ENCODE measurements at regions of chr17 and their contacts with region 1.

Region 1: GRCh38 chr17:5584383-5585286 is at the start of gene NLRP1:
- DNase-seq: peak; percentile 95
- H3K4me3 ChIP-seq: peak within 1 kb of the TSS; percentile 55 to 83 (median 57)
- H3K27ac ChIP-seq: peak within 1 kb of the TSS; percentile 91
- H3K4me1 ChIP-seq: peaks cover 26% of the 10 kb centered on the region
- H3K27me3 ChIP-seq: no peaks in the 10 kb centered on the region
- CTCF ChIP-seq: no peak
- POLR2A ChIP-seq: peak; percentile 95
- total RNA-seq, gene NLRP1: 50.0 and 53.9 TPM in 2 replicates

Region 2: DNA sequence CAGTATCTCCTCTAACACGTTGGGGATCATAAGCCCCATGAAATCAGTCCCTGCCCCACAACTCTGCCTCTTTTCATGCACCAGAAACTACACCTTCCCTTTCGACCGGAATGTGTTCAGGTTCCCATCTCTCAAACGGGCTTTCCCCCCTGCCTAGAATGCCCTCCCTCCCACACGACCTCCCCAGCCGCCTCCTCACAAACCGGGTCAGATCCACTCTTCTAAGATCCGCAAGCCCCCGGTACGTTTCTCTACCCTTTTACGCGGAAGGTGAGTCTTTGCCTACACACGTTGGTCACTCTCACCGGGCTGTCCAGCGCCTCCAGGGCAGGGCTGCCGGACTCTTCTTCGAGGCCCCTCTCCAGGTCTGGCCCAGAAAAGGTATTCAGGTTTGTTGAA is 116.6 kb before region 1 on chr17:
- CTCF ChIA-PET with region 1: no interaction called
- POLR2A ChIA-PET with region 1: no interaction called
- dilution Hi-C with region 1: no loop called
- intact Hi-C with region 1: no loop called
- DNase-seq: no peak
- H3K4me3 ChIP-seq: peak overlapping the region; percentile 77 to 92 (median 87)
- H3K27ac ChIP-seq: no peak overlapping the region
- H3K4me1 ChIP-seq: peaks cover 7% of the 10 kb centered on the region
- H3K27me3 ChIP-seq: no peaks in the 10 kb centered on the region
- CTCF ChIP-seq: no peak
- POLR2A ChIP-seq: no peak

Region 3: DNA sequence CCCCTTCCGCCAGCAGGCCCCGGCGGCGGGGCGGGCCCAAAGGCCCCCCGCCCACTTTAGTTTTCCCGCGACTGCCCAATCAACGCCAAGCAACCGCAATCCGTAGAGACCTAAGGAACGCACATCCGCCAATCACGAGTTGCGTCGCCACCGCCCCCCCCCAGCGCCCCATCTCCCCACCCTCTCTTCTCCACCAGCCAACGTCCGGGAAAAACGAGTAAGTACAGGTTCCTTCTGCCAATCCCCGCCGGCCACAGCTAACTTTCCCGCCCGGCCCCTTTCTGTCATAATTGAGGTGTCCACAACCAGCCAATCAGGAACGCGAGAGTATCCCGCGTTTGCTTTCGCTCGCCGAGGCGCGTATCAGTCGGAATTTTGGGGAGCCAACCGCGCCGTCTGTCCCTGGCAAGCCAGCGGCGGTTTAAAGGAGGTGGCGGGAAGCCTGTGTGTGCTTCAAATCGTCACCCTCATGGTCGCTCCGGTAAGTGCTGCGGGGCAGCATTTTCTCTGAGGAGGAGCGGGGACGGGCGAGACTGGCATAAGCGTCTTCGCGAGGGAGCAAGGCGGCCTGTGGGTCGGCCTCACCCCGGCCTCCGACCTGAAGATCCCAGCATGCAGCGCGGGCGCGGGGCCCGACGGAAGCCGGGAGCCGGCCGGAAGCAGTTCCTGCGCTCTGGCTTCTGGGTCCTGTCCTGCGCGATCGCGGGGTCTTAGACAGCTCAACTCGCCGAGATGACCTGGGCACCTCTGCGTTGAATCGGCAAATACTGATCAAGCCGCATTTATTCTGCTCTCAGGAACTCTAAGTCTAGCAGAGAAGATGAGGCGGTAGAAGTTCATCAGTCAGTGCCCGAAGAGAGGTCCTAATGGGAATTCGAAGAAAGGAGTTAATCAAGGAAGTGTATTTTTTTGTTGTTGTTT is 98.2 kb before region 1 on chr17 and contains the start of gene MIS12:
- CTCF ChIA-PET with region 1: no interaction called
- POLR2A ChIA-PET with region 1: interaction called, 3 read pairs
- dilution Hi-C with region 1: no loop called
- intact Hi-C with region 1: loop called (anchors 1 kb)
- DNase-seq: peak; percentile 100
- H3K4me3 ChIP-seq: peak within 1 kb of the TSS; percentile 95 to 98 (median 96)
- H3K27ac ChIP-seq: peak within 1 kb of the TSS; percentile 95
- H3K4me1 ChIP-seq: peaks cover 20% of the 10 kb centered on the region
- H3K27me3 ChIP-seq: no peaks in the 10 kb centered on the region
- CTCF ChIP-seq: no peak
- POLR2A ChIP-seq: peak; percentile 79
- total RNA-seq, gene MIS12: 18.6 and 20.1 TPM in 2 replicates

Region 4: DNA sequence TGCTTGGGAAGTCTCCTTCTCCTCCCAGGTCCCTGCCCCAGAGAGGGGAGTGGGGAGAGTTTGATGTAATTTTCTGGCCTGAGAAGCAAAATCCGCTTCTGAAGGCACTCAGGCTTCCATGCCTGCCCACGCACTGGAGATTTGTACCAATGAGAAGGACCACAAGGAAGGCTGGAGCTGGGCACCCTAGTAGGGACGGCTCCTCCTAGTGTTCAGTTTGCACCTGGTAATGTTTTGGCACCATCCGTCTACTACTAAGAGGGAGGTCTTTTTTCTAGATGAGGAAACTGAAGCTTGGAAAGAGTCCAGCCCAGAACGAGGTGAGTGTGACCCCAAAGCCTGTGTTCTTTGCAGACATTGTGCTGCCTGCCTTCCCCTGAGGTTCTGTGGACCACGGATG is 83.2 kb after region 1 on chr17:
- CTCF ChIA-PET with region 1: interaction called, 10 read pairs
- POLR2A ChIA-PET with region 1: no interaction called
- dilution Hi-C with region 1: no loop called
- intact Hi-C with region 1: loop called (anchors 5 kb)
- DNase-seq: no peak
- H3K4me3 ChIP-seq: no peak overlapping the region
- H3K27ac ChIP-seq: no peak overlapping the region
- H3K4me1 ChIP-seq: peaks cover 3% of the 10 kb centered on the region
- H3K27me3 ChIP-seq: peaks cover 1 to 2% of the 10 kb centered on the region in 2 experiments
- CTCF ChIP-seq: peak; percentile 22 to 28
- POLR2A ChIP-seq: no peak

Region 5: DNA sequence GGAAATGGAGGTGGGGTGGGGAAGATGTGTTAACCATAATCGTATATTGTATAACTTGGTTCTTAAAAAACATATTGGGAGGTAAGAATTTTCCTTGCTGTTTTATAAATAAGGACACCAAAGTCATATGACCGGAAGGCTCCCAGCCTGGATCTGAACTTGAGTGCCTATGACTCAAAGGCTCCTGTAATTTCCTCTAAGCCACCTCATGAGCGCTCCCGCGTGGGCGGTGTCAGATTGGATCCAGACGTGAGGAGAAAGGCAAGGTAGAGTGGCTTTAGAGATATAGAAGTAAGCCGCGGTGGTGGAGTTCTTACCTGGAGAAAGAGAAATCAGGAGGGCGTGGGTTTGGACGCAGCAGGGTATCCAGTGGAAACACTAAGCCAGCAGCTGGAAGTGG is 195.8 kb after region 1 on chr17:
- CTCF ChIA-PET with region 1: interaction called, 4 read pairs
- POLR2A ChIA-PET with region 1: no interaction called
- dilution Hi-C with region 1: no loop called
- intact Hi-C with region 1: loop called (anchors 5 kb)
- DNase-seq: peak; percentile 58
- H3K4me3 ChIP-seq: no peak overlapping the region
- H3K27ac ChIP-seq: peak overlapping the region; percentile 63
- H3K4me1 ChIP-seq: peaks cover 18% of the 10 kb centered on the region
- H3K27me3 ChIP-seq: no peaks in the 10 kb centered on the region
- CTCF ChIP-seq: peak; percentile 22 to 29
- POLR2A ChIP-seq: no peak

Region 6: DNA sequence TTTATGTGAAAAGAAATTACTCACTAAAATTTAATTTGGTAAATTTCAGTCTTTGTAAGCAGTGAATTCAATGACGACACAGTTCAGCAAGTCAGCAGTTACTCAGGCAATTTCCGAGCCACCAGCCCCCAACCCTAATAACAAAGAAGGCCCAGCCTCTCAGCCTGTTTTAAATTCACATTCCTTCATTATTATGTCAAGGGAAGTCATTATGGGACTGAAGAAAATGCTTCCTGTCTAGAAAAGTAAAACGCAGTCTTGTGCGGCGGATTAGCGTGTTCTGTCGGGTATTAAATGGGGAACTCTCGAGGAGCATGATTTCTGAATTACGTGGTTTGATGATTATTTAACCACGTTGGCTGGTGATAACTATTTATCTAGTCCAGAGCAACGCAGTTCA is 672.7 kb after region 1 on chr17:
- CTCF ChIA-PET with region 1: no interaction called
- POLR2A ChIA-PET with region 1: no interaction called
- dilution Hi-C with region 1: no loop called
- intact Hi-C with region 1: loop called (anchors 1 kb)
- DNase-seq: peak; percentile 88
- H3K4me3 ChIP-seq: no peak overlapping the region
- H3K27ac ChIP-seq: peak overlapping the region; percentile 100
- H3K4me1 ChIP-seq: peaks cover 33% of the 10 kb centered on the region
- H3K27me3 ChIP-seq: no peaks in the 10 kb centered on the region
- CTCF ChIP-seq: no peak
- POLR2A ChIP-seq: no peak

Region 7: GRCh38 chr17:6421700-6422604 is 837.3 kb after region 1 on chr17:
- CTCF ChIA-PET with region 1: interaction called, 93 read pairs
- POLR2A ChIA-PET with region 1: no interaction called
- dilution Hi-C with region 1: no loop called
- intact Hi-C with region 1: loop called (anchors 1 kb)
- DNase-seq: peak; percentile 51
- H3K4me3 ChIP-seq: no peak overlapping the region
- H3K27ac ChIP-seq: no peak overlapping the region
- H3K4me1 ChIP-seq: no peaks in the 10 kb centered on the region
- H3K27me3 ChIP-seq: no peaks in the 10 kb centered on the region
- CTCF ChIP-seq: peak; percentile 80 to 81
- POLR2A ChIP-seq: no peak

Region 8: GRCh38 chr17:6435968-6436367 is 851.3 kb after region 1 on chr17:
- CTCF ChIA-PET with region 1: interaction called, 35 read pairs
- POLR2A ChIA-PET with region 1: no interaction called
- dilution Hi-C with region 1: no loop called
- intact Hi-C with region 1: loop called (anchors 1 kb)
- DNase-seq: peak; percentile 51
- H3K4me3 ChIP-seq: no peak overlapping the region
- H3K27ac ChIP-seq: no peak overlapping the region
- H3K4me1 ChIP-seq: no peaks in the 10 kb centered on the region
- H3K27me3 ChIP-seq: peaks cover 4 to 20% of the 10 kb centered on the region in 2 experiments
- CTCF ChIP-seq: peak; percentile 76 to 79
- POLR2A ChIP-seq: no peak